K562 (cell line): ENCODE measurements at regions of chr20 and their contacts with region 1.

Region 1: GRCh38 chr20:48986899-48987298 is 59.2 kb upstream of the CSE1L start:
- DNase-seq: peak in 2 of 4 experiments; percentile 17
- ATAC-seq: peak; percentile 60; the same call in 2 of the 3 replicates
- H3K4me3 ChIP-seq: no peak overlapping the region
- H3K27ac ChIP-seq: no peak overlapping the region
- H3K4me1 ChIP-seq: no peaks in the 10 kb centered on the region; a peak in 1 of 5 replicates
- H3K27me3 ChIP-seq: no peaks in the 10 kb centered on the region
- CTCF ChIP-seq: peak; percentile 25 to 50 (median 47); a peak in 5 of 6 replicates
- EP300 ChIP-seq: no peak
- POLR2A ChIP-seq: no peak
- RAD21 ChIP-seq: peak in 1 of 2 experiments; percentile 33; a peak in 1 of 4 replicates

Region 2: DNA sequence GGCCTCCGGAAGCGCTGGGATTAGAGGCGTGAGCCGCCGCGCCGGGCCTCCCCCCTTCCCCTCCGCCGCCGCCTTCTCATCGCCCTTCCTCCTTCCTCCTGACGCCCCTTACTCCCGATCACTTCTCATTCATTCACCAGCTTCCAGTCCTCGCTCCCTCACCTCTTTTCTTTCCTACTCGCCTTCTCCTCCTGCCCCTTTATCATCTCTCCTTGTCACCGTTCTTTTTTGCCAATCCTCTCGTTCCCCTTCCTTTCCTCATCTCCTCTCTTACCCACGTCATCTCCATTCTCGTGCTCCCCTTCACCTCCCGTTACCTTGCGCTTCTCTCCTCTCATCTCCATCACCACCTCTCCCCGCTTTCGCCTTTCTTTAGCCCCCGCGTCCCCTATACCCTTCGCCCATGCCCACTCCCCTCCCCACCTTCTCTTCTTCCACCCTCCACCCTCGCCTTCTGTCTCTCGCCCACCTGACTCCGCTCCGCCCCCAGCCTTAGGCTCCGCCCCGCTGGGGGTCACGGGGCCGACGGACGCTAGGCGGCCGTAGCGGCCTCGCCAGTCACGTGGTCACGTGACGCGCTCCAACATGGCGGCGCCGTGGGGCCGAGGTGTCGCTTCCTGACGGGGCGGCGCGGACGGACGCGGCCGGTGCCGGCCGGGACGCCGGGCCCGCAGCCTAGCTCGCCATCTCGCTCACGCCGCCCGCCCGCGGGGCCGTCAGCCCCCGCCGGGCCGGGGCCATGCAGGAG is 65.6 kb before region 1 on chr20 and contains the start of gene ARFGEF2:
- CTCF ChIA-PET with region 1: no interaction called
- POLR2A ChIA-PET with region 1: no interaction called
- in situ Hi-C with region 1: no loop called
- intact Hi-C with region 1: no loop called
- DNase-seq: peak; percentile 97
- ATAC-seq: peak; percentile 92
- H3K4me3 ChIP-seq: peak within 1 kb of the TSS; percentile 76
- H3K27ac ChIP-seq: peak within 1 kb of the TSS; percentile 89
- H3K4me1 ChIP-seq: peaks cover 25 to 34% of the 10 kb centered on the region in 2 experiments; a peak in 4 of 5 replicates
- H3K27me3 ChIP-seq: no peaks in the 10 kb centered on the region
- CTCF ChIP-seq: peak; percentile 12 to 23 (median 17); a peak in 2 of 6 replicates
- EP300 ChIP-seq: peak; percentile 28; the same call in 1 of the 2 replicates
- POLR2A ChIP-seq: peak; percentile 95
- RAD21 ChIP-seq: no peak
- polyA plus RNA-seq, gene ARFGEF2: 4.2 TPM

Region 3: GRCh38 chr20:49100972-49101371 is 114.1 kb after region 1 on chr20:
- CTCF ChIA-PET with region 1: no interaction called
- POLR2A ChIA-PET with region 1: no interaction called
- in situ Hi-C with region 1: no loop called
- intact Hi-C with region 1: loop called (anchors 10 kb)
- DNase-seq: no peak
- ATAC-seq: no peak
- H3K4me3 ChIP-seq: no peak overlapping the region
- H3K27ac ChIP-seq: no peak overlapping the region
- H3K4me1 ChIP-seq: no peaks in the 10 kb centered on the region; a peak in 1 of 5 replicates
- H3K27me3 ChIP-seq: no peaks in the 10 kb centered on the region
- CTCF ChIP-seq: no peak
- EP300 ChIP-seq: no peak
- POLR2A ChIP-seq: no peak
- RAD21 ChIP-seq: no peak